Dorsolateral prefrontal cortex (tissue), 120 donors: ENCODE measurements at regions of chr19 and their contacts with region 1.

Region 1: GRCh38 chr19:1551068-1552040 is 16.8 kb downstream of the MEX3D start:
- DNase-seq: no peak
- H3K4me3 ChIP-seq: no peak overlapping the region
- H3K27ac ChIP-seq: no peak overlapping the region
- H3K27me3 ChIP-seq: no peaks in the 10 kb centered on the region
- CTCF ChIP-seq: no peak

Region 2: GRCh38 chr19:1438035-1438932 is 113.1 kb before region 1 on chr19 and contains the start of gene RPS15:
- intact Hi-C with region 1: no loop called
- DNase-seq: peak; percentile 87 to 95 (median 92)
- H3K4me3 ChIP-seq: peak within 1 kb of the TSS; percentile 49 to 100 (median 88)
- H3K27ac ChIP-seq: peak within 1 kb of the TSS; percentile 53 to 96 (median 87)
- H3K27me3 ChIP-seq: no peaks in the 10 kb centered on the region
- CTCF ChIP-seq: peak; percentile 94 to 100 (median 99)
- total RNA-seq, gene RPS15: 343 to 670 (median 497) TPM

Region 3: GRCh38 chr19:1577929-1578586 is 26.7 kb after region 1 on chr19:
- intact Hi-C with region 1: loop called in 1 of 2 experiments (anchors 1 kb)
- DNase-seq: no peak
- H3K4me3 ChIP-seq: no peak overlapping the region
- H3K27ac ChIP-seq: peak overlapping the region in 1 of 59 donors; percentile 48
- H3K27me3 ChIP-seq: no peaks in the 10 kb centered on the region
- CTCF ChIP-seq: no peak

Region 4: DNA sequence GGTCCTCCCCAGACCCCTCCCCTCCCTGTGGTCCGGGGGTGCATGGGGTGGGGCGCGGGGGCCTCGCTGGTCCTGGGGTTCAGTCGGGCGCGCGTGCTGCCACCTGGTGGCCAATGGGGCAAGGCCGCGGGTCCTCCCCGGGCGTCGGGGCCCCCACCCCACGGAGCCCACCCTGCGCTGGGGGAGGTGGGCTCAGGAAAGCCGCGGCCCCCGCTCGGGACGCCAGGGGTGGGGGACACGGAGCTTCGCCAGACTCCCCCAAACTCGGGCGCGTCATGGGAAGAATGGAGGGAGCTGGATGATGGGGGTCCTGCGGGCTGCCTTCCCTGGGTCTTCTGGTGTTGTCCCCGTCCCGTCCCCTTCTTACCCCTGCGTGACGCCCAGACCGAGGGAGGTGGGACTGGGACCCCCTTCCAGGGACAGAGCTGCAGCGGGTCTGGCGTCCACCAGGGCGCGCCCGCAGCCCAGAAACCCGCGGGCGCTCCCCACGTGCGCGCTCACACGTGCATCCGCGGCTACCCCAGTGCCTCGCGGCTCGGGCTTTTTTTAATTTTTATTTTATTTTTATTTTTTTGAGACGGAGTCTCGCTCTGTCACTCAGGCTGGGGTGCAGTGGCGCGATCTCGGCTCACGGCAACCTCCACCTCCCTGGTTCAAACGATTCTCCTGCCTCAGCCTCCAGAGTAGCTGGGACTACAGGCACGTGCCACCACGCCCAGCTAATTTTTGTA is 120.8 kb after region 1 on chr19:
- intact Hi-C with region 1: loop called (anchors 2 to 5 kb)
- DNase-seq: peak in 1 of 10 donors; percentile 23
- H3K4me3 ChIP-seq: peak overlapping the region in 23 of 59 donors; percentile 3 to 50 (median 27)
- H3K27ac ChIP-seq: no peak overlapping the region
- H3K27me3 ChIP-seq: peaks cover 0 to 93% (median 82%) of the 10 kb centered on the region in 45 donors
- CTCF ChIP-seq: peak; percentile 45 to 92 (median 75)

Region 5: DNA sequence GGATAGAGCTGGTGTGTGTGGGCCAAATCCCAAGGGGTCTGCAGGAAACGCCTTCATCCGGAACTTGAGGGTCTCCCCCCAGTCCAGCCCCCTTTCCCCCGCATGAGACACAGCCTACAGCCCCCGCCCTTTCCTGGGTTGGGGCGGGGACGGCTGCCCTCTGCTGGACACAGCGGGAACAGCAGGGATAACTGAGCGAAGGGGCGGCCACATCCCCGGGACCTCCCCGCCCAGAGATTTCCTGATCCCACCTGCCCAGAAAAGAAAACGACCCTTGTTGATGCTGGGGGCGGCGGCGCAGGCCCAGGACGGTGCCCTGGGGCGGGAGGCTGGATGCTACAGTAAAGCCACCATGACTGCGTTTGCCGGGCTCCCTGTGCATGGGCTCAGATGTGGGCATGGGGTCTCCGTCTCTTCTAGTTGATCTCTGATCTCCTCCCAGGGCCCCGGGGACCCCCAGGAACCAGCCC is 216.1 kb after region 1 on chr19:
- intact Hi-C with region 1: loop called in 1 of 2 experiments (anchors 5 kb)
- DNase-seq: peak in 5 of 10 donors; percentile 10 to 66 (median 28)
- H3K4me3 ChIP-seq: no peak overlapping the region
- H3K27ac ChIP-seq: no peak overlapping the region
- H3K27me3 ChIP-seq: peaks cover 7 to 98% (median 78%) of the 10 kb centered on the region in 45 donors
- CTCF ChIP-seq: peak; percentile 51 to 95 (median 87)

Region 6: GRCh38 chr19:1825909-1826556 is 274.7 kb after region 1 on chr19:
- intact Hi-C with region 1: loop called in 1 of 2 experiments (anchors 2 kb)
- DNase-seq: peak; percentile 65 to 81 (median 72)
- H3K4me3 ChIP-seq: peak overlapping the region in 1 of 59 donors; percentile 7
- H3K27ac ChIP-seq: peak overlapping the region in 2 of 59 donors; percentile 4 to 39
- H3K27me3 ChIP-seq: no peaks in the 10 kb centered on the region
- CTCF ChIP-seq: peak; percentile 59 to 95 (median 85)